ENCODE measurements at regions of chr11 and their contacts with region 1.

Region 1: GRCh38 chr11:33808228-33808828 is 34.0 kb upstream of the FBXO3 start:
- DNase-seq: peak; percentile 67
- H3K4me3 Mint-ChIP-seq: no peak overlapping the region
- H3K27ac Mint-ChIP-seq: no peak overlapping the region
- H3K4me1 Mint-ChIP-seq: no peaks in the 10 kb centered on the region
- H3K27me3 Mint-ChIP-seq: peaks cover 33% of the 10 kb centered on the region

Region 2: DNA sequence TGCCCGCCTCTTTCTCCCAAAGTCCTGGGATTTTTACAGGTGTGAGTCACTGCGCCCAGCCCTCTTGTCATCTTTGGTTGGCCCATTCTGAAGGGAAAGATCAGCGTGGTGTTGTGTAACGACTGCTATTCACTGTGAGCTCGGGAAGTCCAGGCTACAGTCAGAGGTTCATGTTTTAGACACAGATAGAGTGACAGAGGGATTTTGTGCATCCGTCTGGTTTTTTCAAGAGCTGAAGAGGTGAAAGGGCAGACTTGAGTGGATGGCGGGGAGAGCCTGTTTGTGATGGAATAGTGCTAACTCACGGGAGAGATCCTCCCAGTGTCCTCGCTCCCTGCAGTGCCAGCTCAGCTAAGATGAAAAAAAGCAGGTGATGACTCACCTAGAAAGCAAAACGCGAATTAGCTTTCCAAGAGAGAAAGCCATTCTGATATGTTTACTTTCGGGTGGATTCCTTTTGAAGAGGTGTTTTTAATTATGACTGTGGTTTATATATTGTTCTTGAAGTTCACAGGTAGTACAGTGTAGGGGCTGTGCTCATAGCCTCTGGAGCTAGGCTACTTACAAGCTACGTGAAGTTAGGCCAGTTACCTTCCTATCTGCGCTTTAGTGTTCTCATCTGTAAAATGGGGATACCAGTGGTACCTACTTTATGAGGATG is 175.0 kb before region 1 on chr11:
- intact Hi-C with region 1: no loop called
- DNase-seq: no peak
- H3K4me3 Mint-ChIP-seq: no peak overlapping the region
- H3K27ac Mint-ChIP-seq: no peak overlapping the region
- H3K4me1 Mint-ChIP-seq: no peaks in the 10 kb centered on the region
- H3K27me3 Mint-ChIP-seq: peaks cover 6% of the 10 kb centered on the region

Region 3: GRCh38 chr11:33970984-33971466 is 162.7 kb after region 1 on chr11:
- intact Hi-C with region 1: loop called (anchors 1 kb)
- DNase-seq: no peak
- H3K4me3 Mint-ChIP-seq: no peak overlapping the region
- H3K27ac Mint-ChIP-seq: no peak overlapping the region
- H3K4me1 Mint-ChIP-seq: no peaks in the 10 kb centered on the region
- H3K27me3 Mint-ChIP-seq: peaks cover 12% of the 10 kb centered on the region

Region 4: GRCh38 chr11:33987975-33988580 is 179.8 kb after region 1 on chr11:
- intact Hi-C with region 1: loop called (anchors 1 kb)
- DNase-seq: peak; percentile 63
- H3K4me3 Mint-ChIP-seq: no peak overlapping the region
- H3K27ac Mint-ChIP-seq: no peak overlapping the region
- H3K4me1 Mint-ChIP-seq: peaks cover 6% of the 10 kb centered on the region
- H3K27me3 Mint-ChIP-seq: peaks cover 3% of the 10 kb centered on the region

Region 5: GRCh38 chr11:34492806-34493414 is 684.6 kb after region 1 on chr11:
- intact Hi-C with region 1: loop called (anchors 1 kb)
- DNase-seq: no peak
- H3K4me3 Mint-ChIP-seq: no peak overlapping the region
- H3K27ac Mint-ChIP-seq: no peak overlapping the region
- H3K4me1 Mint-ChIP-seq: no peaks in the 10 kb centered on the region
- H3K27me3 Mint-ChIP-seq: peaks cover 3% of the 10 kb centered on the region

Measured in activated T-helper 1 cell treated with anti-CD3 and anti-CD28 coated beads, Interleukin-12 subunit alpha, Interleukin-12 subunit beta, Interleukin-2, Interleukin-4 antibody, amounts not matched to agents 30 ng/mL and 10 ng/mL and 1 ng/mL, durations not matched to agents 14 hours and 24 hours and 36 hours (primary cell).